B cell (primary cell): ENCODE measurements at regions of chr15 and their contacts with region 1.

Region 1: GRCh38 chr15:59247364-59247763 is 40.7 kb downstream of the LDHAL6B start:
- DNase-seq: peak; percentile 81
- ATAC-seq: peak; percentile 52
- H3K4me3 ChIP-seq: no peak overlapping the region
- H3K4me3 Mint-ChIP-seq: no peak overlapping the region
- H3K27ac ChIP-seq: no peak overlapping the region
- H3K27ac Mint-ChIP-seq: peak overlapping the region; percentile 37
- H3K4me1 ChIP-seq: peaks cover 30 to 42% of the 10 kb centered on the region in 2 donors
- H3K4me1 Mint-ChIP-seq: peaks cover 59% of the 10 kb centered on the region
- H3K27me3 ChIP-seq: no peaks in the 10 kb centered on the region
- H3K27me3 Mint-ChIP-seq: no peaks in the 10 kb centered on the region
- CTCF ChIP-seq: peak; percentile 80

Region 2: GRCh38 chr15:59104912-59105732 is 142.2 kb before region 1 on chr15 and contains the start of gene CCNB2:
- CTCF ChIA-PET with region 1: no interaction called
- POLR2A ChIA-PET with region 1: no interaction called
- intact Hi-C with region 1: loop called (anchors 1 kb)
- DNase-seq: peak; percentile 92
- ATAC-seq: peak; percentile 100
- H3K4me3 ChIP-seq: peak within 1 kb of the TSS; percentile 58 to 75 (median 66)
- H3K4me3 Mint-ChIP-seq: peak within 1 kb of the TSS; percentile 91
- H3K27ac ChIP-seq: peak within 1 kb of the TSS; percentile 50 to 79
- H3K27ac Mint-ChIP-seq: peak within 1 kb of the TSS; percentile 94
- H3K4me1 ChIP-seq: peaks cover 9 to 13% of the 10 kb centered on the region in 2 donors
- H3K4me1 Mint-ChIP-seq: peaks cover 14% of the 10 kb centered on the region
- H3K27me3 ChIP-seq: no peaks in the 10 kb centered on the region
- H3K27me3 Mint-ChIP-seq: no peaks in the 10 kb centered on the region
- CTCF ChIP-seq: no peak
- total RNA-seq, gene CCNB2: 0.67 TPM in 1 of 2 replicates, not detected in the other

Region 3: DNA sequence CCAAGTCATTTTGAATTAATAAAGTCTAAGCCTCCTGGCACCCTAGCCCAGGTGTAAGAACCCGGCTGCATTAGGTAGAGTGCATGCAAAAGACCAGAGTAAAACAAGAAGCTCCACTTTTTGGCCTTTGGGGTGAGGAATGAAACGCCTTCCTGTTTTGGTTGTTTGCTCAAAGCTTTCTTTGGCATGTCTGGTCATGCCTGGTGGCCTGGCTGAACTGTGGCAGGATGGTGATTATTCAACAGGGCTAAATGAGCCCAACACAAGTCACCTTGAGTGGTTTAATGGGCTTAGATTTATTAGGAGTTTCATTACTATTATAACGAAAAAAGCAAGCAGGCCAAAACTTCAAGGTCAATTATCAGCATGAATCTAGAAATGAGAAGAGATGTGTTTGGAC is 81.6 kb before region 1 on chr15:
- CTCF ChIA-PET with region 1: no interaction called
- POLR2A ChIA-PET with region 1: no interaction called
- intact Hi-C with region 1: no loop called
- DNase-seq: no peak
- ATAC-seq: no peak
- H3K4me3 ChIP-seq: no peak overlapping the region
- H3K4me3 Mint-ChIP-seq: no peak overlapping the region
- H3K27ac ChIP-seq: no peak overlapping the region
- H3K27ac Mint-ChIP-seq: no peak overlapping the region
- H3K4me1 ChIP-seq: peaks cover 0 to 5% of the 10 kb centered on the region in 2 donors
- H3K4me1 Mint-ChIP-seq: no peaks in the 10 kb centered on the region
- H3K27me3 ChIP-seq: no peaks in the 10 kb centered on the region
- H3K27me3 Mint-ChIP-seq: no peaks in the 10 kb centered on the region
- CTCF ChIP-seq: no peak

Region 4: GRCh38 chr15:59290295-59291212 is 43.2 kb after region 1 on chr15:
- CTCF ChIA-PET with region 1: interaction called, 16 read pairs
- POLR2A ChIA-PET with region 1: no interaction called
- intact Hi-C with region 1: no loop called
- DNase-seq: peak; percentile 33
- ATAC-seq: peak; percentile 58
- H3K4me3 ChIP-seq: peak overlapping the region in 2 of 5 experiments; percentile 6 to 28
- H3K4me3 Mint-ChIP-seq: peak overlapping the region; percentile 83
- H3K27ac ChIP-seq: peak overlapping the region; percentile 22 to 43
- H3K27ac Mint-ChIP-seq: peak overlapping the region; percentile 80
- H3K4me1 ChIP-seq: peaks cover 32 to 39% of the 10 kb centered on the region in 2 donors
- H3K4me1 Mint-ChIP-seq: peaks cover 61% of the 10 kb centered on the region
- H3K27me3 ChIP-seq: no peaks in the 10 kb centered on the region
- H3K27me3 Mint-ChIP-seq: no peaks in the 10 kb centered on the region
- CTCF ChIP-seq: no peak

Region 5: GRCh38 chr15:59349680-59350420 is 102.5 kb after region 1 on chr15:
- CTCF ChIA-PET with region 1: interaction called, 10 read pairs
- POLR2A ChIA-PET with region 1: no interaction called
- intact Hi-C with region 1: loop called (anchors 5 kb)
- DNase-seq: no peak
- ATAC-seq: no peak
- H3K4me3 ChIP-seq: no peak overlapping the region
- H3K4me3 Mint-ChIP-seq: no peak overlapping the region
- H3K27ac ChIP-seq: peak overlapping the region in 1 of 2 donors; percentile 49
- H3K27ac Mint-ChIP-seq: peak overlapping the region; percentile 43
- H3K4me1 ChIP-seq: peaks cover 65 to 69% of the 10 kb centered on the region in 2 donors
- H3K4me1 Mint-ChIP-seq: peaks cover 77% of the 10 kb centered on the region
- H3K27me3 ChIP-seq: no peaks in the 10 kb centered on the region
- H3K27me3 Mint-ChIP-seq: no peaks in the 10 kb centered on the region
- CTCF ChIP-seq: no peak

Region 6: DNA sequence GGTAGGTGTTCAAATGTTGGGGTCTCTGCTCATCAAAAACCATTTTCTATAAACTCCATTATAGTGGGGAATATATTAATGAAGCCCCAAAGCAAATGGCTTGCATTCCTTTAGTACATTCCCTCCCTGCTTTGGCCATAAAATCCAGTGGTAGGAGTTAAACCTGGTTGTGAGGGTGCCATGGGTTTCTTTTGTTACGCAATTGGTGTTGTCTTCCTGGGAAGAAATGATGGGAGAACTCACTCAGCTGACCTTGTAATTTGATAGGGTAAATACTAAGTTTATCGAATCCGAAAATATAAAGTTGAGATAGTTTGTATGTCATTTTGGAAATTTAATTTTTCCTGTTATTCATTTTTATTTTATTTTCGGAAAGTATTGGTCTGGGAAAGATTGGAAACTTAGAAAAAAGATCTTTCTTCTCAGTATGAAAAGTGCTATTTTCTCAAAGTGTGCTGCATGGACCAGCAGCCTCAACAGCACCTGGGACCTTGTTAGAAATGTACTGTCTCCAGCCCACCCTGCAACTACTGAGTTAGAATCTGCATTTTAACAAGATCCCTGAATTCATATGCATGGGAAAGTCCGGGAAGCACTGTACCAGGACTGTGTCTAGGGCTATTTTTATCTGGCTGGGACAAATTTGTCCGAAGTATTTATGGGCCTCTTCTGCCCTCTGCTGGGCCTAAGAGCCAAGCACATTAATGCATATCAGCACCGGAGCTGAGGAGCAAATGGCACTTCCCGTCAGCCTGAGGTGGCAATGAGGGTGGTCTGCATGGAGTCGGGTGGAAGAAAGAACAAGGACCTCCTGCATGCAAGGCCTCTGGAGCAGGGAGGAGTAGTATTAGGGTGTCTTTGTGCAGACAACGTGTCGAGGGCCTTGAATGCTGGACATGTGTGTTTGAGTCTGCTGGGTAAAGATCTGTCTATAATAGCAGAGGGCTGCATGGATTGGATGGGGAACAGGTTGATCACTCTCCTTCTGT is 245.3 kb after region 1 on chr15:
- CTCF ChIA-PET with region 1: interaction called, 104 read pairs
- POLR2A ChIA-PET with region 1: no interaction called
- intact Hi-C with region 1: loop called (anchors 1 kb)
- DNase-seq: peak; percentile 80
- ATAC-seq: peak; percentile 88
- H3K4me3 ChIP-seq: no peak overlapping the region
- H3K4me3 Mint-ChIP-seq: no peak overlapping the region
- H3K27ac ChIP-seq: no peak overlapping the region
- H3K27ac Mint-ChIP-seq: no peak overlapping the region
- H3K4me1 ChIP-seq: peaks cover 8% of the 10 kb centered on the region in 2 donors
- H3K4me1 Mint-ChIP-seq: peaks cover 9% of the 10 kb centered on the region
- H3K27me3 ChIP-seq: no peaks in the 10 kb centered on the region
- H3K27me3 Mint-ChIP-seq: no peaks in the 10 kb centered on the region
- CTCF ChIP-seq: peak; percentile 99

Region 7: GRCh38 chr15:59819092-59819491 is 571.7 kb after region 1 on chr15:
- CTCF ChIA-PET with region 1: no interaction called
- POLR2A ChIA-PET with region 1: no interaction called
- intact Hi-C with region 1: no loop called
- DNase-seq: no peak
- ATAC-seq: no peak
- H3K4me3 ChIP-seq: no peak overlapping the region
- H3K4me3 Mint-ChIP-seq: no peak overlapping the region
- H3K27ac ChIP-seq: no peak overlapping the region
- H3K27ac Mint-ChIP-seq: no peak overlapping the region
- H3K4me1 ChIP-seq: no peaks in the 10 kb centered on the region
- H3K4me1 Mint-ChIP-seq: no peaks in the 10 kb centered on the region
- H3K27me3 ChIP-seq: peaks cover 0 to 11% (median 4%) of the 10 kb centered on the region in 4 experiments
- H3K27me3 Mint-ChIP-seq: peaks cover 45% of the 10 kb centered on the region
- CTCF ChIP-seq: no peak